Naive thymus-derived CD4-positive, alpha-beta T cell (primary cell): ENCODE measurements at regions of chr12 and their contacts with region 1.

Region 1: GRCh38 chr12:48957141-48958048 is at the start of gene ARF3:
- DNase-seq: peak; percentile 84 to 92 (median 91)
- ATAC-seq: peak; percentile 96
- H3K4me3 ChIP-seq: peak within 1 kb of the TSS; percentile 86
- H3K4me3 Mint-ChIP-seq: peak within 1 kb of the TSS; percentile 90 to 99 (median 96)
- H3K27ac ChIP-seq: peak within 1 kb of the TSS; percentile 80
- H3K27ac Mint-ChIP-seq: peak within 1 kb of the TSS; percentile 78 to 96 (median 88)
- H3K4me1 ChIP-seq: peaks cover 17 to 22% of the 10 kb centered on the region in 2 donors
- H3K4me1 Mint-ChIP-seq: peaks cover 27 to 55% (median 47%) of the 10 kb centered on the region in 7 donors
- H3K27me3 ChIP-seq: no peaks in the 10 kb centered on the region
- H3K27me3 Mint-ChIP-seq: peaks cover 0 to 29% (median 3%) of the 10 kb centered on the region in 5 donors
- total RNA-seq, gene ARF3: 48.7 to 137 (median 56.1) TPM

Region 2: DNA sequence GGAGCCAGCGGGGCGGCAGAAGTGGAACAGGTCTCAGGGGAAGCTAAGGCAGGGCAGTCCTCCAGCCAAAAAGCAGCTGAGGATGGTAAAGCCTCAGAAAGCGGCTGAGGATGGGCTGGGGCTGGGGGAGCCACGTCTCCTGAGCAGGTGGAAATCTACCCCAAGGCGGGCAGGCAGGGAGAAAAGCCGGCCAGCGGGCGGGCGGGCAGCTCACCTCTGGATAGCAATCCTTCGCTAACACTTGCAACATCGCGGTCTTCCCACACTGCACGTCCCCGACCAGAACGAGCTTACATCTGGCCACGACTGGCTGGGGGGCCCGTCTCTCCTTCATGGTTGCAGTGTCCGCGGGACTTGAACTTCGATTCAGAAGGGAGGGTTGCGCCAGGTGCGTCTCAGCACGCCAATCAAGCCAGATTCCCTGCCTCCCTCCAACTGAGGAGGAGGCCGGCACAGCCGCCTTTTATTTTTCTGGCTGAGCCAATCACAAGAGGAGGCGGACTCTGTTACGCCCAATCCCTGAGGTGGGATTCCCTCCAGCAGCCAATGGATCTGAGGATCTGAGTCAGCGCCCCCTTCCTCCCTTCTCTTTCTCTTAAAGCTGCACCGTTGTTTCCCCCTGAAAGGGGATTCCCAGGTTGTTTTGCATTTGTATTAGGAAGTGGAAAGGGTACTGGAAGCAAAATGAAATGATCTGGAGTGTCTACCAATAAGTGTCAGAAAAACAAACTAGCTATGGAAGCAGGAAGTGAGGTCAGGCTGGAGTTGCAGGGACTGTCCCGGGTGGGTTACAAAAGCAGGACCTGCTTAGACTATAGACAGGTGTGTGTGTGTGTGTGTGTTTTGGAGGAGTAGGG is 91.7 kb before region 1 on chr12 and contains the start of gene RND1:
- CTCF ChIA-PET with region 1: no interaction called
- POLR2A ChIA-PET with region 1: interaction called, 5 read pairs
- intact Hi-C with region 1: loop called in 1 of 2 experiments (anchors 1 kb)
- DNase-seq: peak; percentile 50 to 92 (median 82)
- ATAC-seq: peak; percentile 96
- H3K4me3 ChIP-seq: peak within 1 kb of the TSS; percentile 69
- H3K4me3 Mint-ChIP-seq: peak within 1 kb of the TSS; percentile 87 to 95 (median 94)
- H3K27ac ChIP-seq: peak within 1 kb of the TSS; percentile 62
- H3K27ac Mint-ChIP-seq: peak within 1 kb of the TSS; percentile 66 to 96 (median 85)
- H3K4me1 ChIP-seq: peaks cover 10 to 11% of the 10 kb centered on the region in 2 donors
- H3K4me1 Mint-ChIP-seq: peaks cover 15 to 28% (median 25%) of the 10 kb centered on the region in 7 donors
- H3K27me3 ChIP-seq: no peaks in the 10 kb centered on the region
- H3K27me3 Mint-ChIP-seq: peaks cover 23 to 40% (median 28%) of the 10 kb centered on the region in 5 donors
- total RNA-seq, gene RND1: 1.1 to 13.5 (median 2.3) TPM

Region 3: GRCh38 chr12:48903982-48904411 is 53.4 kb before region 1 on chr12:
- CTCF ChIA-PET with region 1: interaction called, 4 read pairs
- POLR2A ChIA-PET with region 1: no interaction called
- intact Hi-C with region 1: loop called in 1 of 2 experiments (anchors 1 kb)
- DNase-seq: peak; percentile 64 to 89 (median 83)
- ATAC-seq: peak; percentile 100
- H3K4me3 ChIP-seq: peak overlapping the region; percentile 60
- H3K4me3 Mint-ChIP-seq: peak overlapping the region; percentile 48 to 81 (median 78)
- H3K27ac ChIP-seq: no peak overlapping the region
- H3K27ac Mint-ChIP-seq: peak overlapping the region in 5 of 9 donors; percentile 32 to 84 (median 57)
- H3K4me1 ChIP-seq: peaks cover 0 to 9% of the 10 kb centered on the region in 2 donors
- H3K4me1 Mint-ChIP-seq: peaks cover 0 to 11% (median 8%) of the 10 kb centered on the region in 7 donors
- H3K27me3 ChIP-seq: no peaks in the 10 kb centered on the region
- H3K27me3 Mint-ChIP-seq: peaks cover 0 to 7% (median 0%) of the 10 kb centered on the region in 5 donors

Region 4: DNA sequence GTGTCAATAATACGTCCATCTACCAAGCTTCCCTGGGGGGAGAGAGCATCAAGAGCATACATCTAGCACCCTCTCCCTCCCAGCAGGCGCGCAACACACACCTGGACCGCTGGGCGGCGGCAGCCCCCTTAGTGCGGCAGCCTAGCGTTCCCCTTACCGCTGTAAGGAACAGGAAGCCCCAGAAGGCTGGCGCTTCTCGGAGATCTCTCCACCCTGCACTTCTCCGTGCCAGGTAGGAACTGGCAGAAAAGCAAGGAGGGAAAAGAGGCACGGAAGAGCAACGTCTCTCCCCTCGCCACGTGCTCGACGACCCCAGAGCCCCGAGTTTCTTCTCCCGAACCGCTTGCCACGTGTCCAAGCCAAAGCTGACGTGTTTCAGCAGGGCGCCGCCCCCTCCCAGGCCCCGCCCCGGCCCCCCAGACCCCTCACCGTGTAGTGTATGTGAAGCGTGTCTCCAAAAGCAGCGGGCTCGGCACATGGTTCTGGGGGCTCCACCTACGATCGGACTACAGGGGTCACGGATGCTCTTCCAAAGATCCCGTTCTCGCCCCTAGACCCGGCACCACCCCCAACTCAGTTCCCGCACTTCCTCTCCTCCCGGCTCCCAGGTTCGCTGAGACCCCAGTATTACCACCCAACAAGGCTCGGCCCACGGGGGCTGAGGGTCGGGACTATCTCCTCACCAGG is 32.6 kb before region 1 on chr12:
- CTCF ChIA-PET with region 1: interaction called, 6 read pairs
- POLR2A ChIA-PET with region 1: interaction called, 4 read pairs
- intact Hi-C with region 1: loop called (anchors 1 to 2 kb)
- DNase-seq: peak; percentile 56 to 80 (median 77)
- ATAC-seq: peak; percentile 86
- H3K4me3 ChIP-seq: peak overlapping the region; percentile 72
- H3K4me3 Mint-ChIP-seq: peak overlapping the region; percentile 89 to 98 (median 93)
- H3K27ac ChIP-seq: peak overlapping the region; percentile 99
- H3K27ac Mint-ChIP-seq: peak overlapping the region; percentile 74 to 98 (median 95)
- H3K4me1 ChIP-seq: peaks cover 10 to 18% of the 10 kb centered on the region in 2 donors
- H3K4me1 Mint-ChIP-seq: peaks cover 18 to 52% (median 42%) of the 10 kb centered on the region in 7 donors
- H3K27me3 ChIP-seq: no peaks in the 10 kb centered on the region
- H3K27me3 Mint-ChIP-seq: no peaks in the 10 kb centered on the region

Region 5: GRCh38 chr12:48969833-48970701 is 12.7 kb after region 1 on chr12:
- CTCF ChIA-PET with region 1: interaction called, 6 read pairs
- POLR2A ChIA-PET with region 1: interaction called, 8 read pairs
- intact Hi-C with region 1: loop called in 1 of 2 experiments (anchors 2 kb)
- DNase-seq: peak in 6 of 9 donors; percentile 26 to 57 (median 38)
- ATAC-seq: peak; percentile 76
- H3K4me3 ChIP-seq: peak overlapping the region; percentile 40
- H3K4me3 Mint-ChIP-seq: peak overlapping the region; percentile 29 to 89 (median 71)
- H3K27ac ChIP-seq: no peak overlapping the region
- H3K27ac Mint-ChIP-seq: peak overlapping the region in 1 of 9 donors; percentile 24
- H3K4me1 ChIP-seq: peaks cover 20 to 38% of the 10 kb centered on the region in 2 donors
- H3K4me1 Mint-ChIP-seq: peaks cover 15 to 33% (median 24%) of the 10 kb centered on the region in 7 donors
- H3K27me3 ChIP-seq: peaks cover 6 to 31% of the 10 kb centered on the region in 2 donors
- H3K27me3 Mint-ChIP-seq: peaks cover 35 to 80% (median 38%) of the 10 kb centered on the region in 5 donors

Region 6: DNA sequence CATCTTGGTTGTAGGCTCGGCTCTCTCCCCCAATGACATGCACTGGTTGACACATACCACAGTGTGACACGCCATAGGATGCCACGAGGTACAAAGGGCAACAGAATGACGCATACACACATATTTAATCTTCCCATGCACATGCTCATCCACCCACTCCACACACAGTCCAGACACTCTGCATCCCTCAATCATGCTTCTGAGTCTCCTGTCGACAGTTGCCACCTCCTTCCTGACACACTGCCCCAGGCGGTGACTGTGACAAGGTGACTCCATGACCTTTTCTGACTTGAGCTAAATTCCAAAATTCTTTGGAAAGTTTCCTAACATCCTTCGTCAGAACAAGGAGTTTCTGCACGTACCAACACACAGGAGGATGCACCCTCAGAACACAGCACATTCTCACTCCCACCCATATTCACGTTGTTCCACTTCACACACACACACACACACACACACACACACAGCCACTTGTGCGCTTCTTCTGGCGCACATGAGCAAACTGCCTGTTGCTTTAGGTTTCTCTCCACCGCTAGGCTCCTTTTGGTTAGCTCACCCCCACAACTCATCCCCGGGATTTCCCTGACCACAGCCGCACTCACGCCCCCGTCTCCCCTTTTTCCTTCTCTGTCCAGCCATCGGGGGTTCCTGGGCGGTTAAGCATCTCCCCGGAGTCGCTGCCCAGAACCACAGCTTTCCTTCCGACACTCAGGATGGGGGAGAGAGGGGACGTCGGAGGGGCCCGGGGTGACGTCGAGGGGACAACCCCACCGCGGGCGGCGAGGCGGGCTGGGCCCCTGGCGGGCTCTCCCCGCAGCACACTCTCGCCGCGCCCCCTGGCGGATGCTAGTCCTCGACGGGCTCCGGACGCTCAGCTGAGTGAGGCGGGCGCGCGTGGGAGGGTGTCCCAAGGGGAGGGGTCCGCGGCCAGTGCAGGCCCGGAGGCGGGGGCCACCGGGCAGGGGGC is 20.2 kb after region 1 on chr12:
- CTCF ChIA-PET with region 1: interaction called, 10 read pairs
- POLR2A ChIA-PET with region 1: interaction called, 6 read pairs
- intact Hi-C with region 1: loop called (anchors 1 to 2 kb)
- DNase-seq: peak; percentile 52 to 90 (median 75)
- ATAC-seq: peak; percentile 77
- H3K4me3 ChIP-seq: no peak overlapping the region
- H3K4me3 Mint-ChIP-seq: peak overlapping the region; percentile 24 to 85 (median 56)
- H3K27ac ChIP-seq: no peak overlapping the region
- H3K27ac Mint-ChIP-seq: peak overlapping the region in 7 of 9 donors; percentile 26 to 81 (median 61)
- H3K4me1 ChIP-seq: peaks cover 37% of the 10 kb centered on the region in 2 donors
- H3K4me1 Mint-ChIP-seq: peaks cover 28 to 53% (median 47%) of the 10 kb centered on the region in 7 donors
- H3K27me3 ChIP-seq: peaks cover 3 to 11% of the 10 kb centered on the region in 2 donors
- H3K27me3 Mint-ChIP-seq: peaks cover 18 to 92% (median 40%) of the 10 kb centered on the region in 5 donors

Region 7: GRCh38 chr12:48988030-48988649 is 30.7 kb after region 1 on chr12:
- CTCF ChIA-PET with region 1: interaction called, 11 read pairs
- POLR2A ChIA-PET with region 1: no interaction called
- intact Hi-C with region 1: no loop called
- DNase-seq: peak in 8 of 9 donors; percentile 45 to 82 (median 60)
- ATAC-seq: peak; percentile 90
- H3K4me3 ChIP-seq: no peak overlapping the region
- H3K4me3 Mint-ChIP-seq: no peak overlapping the region
- H3K27ac ChIP-seq: no peak overlapping the region
- H3K27ac Mint-ChIP-seq: no peak overlapping the region
- H3K4me1 ChIP-seq: no peaks in the 10 kb centered on the region
- H3K4me1 Mint-ChIP-seq: peaks cover 0 to 12% (median 8%) of the 10 kb centered on the region in 7 donors
- H3K27me3 ChIP-seq: no peaks in the 10 kb centered on the region
- H3K27me3 Mint-ChIP-seq: peaks cover 21 to 79% (median 31%) of the 10 kb centered on the region in 5 donors